ENCODE measurements at regions of chr19 and their contacts with region 1.

Region 1: DNA sequence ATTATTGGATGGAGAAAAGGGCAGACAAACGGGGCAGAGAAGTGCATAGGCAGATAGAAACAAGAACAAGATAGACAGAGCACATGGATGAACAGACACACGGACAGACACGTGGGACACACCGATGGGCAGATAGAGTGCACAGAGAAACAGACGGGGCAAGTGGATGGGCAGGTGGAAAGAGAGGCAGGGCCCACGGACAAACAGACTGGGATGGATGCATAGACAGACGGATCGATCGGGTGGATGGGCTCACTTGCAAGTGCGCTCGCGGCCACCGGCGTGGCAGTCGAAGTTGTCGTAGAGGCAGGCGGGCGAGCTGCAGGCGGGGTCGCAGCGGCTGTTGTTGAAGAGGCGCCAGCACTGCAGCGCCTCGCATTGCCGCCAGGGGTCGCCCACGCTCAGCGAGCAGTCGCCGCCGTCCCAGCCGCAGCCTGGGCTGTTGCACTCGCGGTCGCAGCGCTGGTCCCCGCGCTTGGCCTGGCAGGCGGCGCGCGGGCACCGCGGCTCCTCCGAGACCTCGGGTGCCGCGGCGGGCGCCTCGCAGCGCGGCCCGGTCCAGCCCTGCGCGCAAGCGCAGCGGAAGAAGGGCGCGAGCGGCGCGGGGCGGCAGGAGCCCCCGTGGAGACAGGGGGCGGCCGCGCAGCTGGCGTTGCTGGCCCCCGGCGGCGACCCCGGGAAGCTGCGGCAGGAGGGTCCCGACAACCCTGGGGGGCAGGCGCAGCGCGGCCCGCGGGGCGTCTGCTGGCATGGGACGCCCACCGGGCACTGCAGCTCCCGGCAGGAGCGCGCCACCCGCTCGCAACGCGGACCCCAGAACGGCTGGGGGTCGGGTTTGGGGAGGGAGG is 23.3 kb downstream of the NOTCH3 start:
- DNase-seq: peak; percentile 66 to 88 (median 82)
- ATAC-seq: peak; percentile 99
- H3K4me3 ChIP-seq: no peak overlapping the region
- H3K4me3 Mint-ChIP-seq: peak overlapping the region; percentile 29 to 84 (median 53)
- H3K27ac ChIP-seq: no peak overlapping the region
- H3K27ac Mint-ChIP-seq: peak overlapping the region in 1 of 9 donors; percentile 47
- H3K4me1 ChIP-seq: peaks cover 0 to 5% of the 10 kb centered on the region in 2 donors
- H3K4me1 Mint-ChIP-seq: peaks cover 4 to 8% (median 5%) of the 10 kb centered on the region in 7 donors
- H3K27me3 ChIP-seq: no peaks in the 10 kb centered on the region
- H3K27me3 Mint-ChIP-seq: peaks cover 0 to 20% (median 9%) of the 10 kb centered on the region in 5 donors

Region 2: DNA sequence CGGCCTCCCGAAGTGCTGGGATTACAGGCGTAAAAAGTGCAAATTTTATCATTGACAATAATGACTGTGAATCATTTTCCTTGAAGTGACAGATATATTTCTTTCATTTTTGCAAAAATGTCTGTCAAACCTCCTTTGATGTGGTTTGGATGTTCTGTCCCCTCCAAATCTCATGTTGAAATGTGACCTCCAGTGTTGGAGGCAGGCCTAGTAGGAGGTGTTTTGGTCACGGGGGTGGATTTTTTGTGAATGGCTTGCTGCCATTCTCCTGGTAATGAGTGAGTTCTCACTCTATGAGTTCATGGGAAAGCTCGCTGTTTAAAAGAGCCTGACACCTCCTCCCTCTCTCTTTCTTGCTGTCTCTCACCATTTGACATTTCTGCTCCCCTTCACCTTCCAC is 192.4 kb before region 1 on chr19:
- CTCF ChIA-PET with region 1: no interaction called
- POLR2A ChIA-PET with region 1: no interaction called
- intact Hi-C with region 1: no loop called
- DNase-seq: no peak
- ATAC-seq: no peak
- H3K4me3 ChIP-seq: no peak overlapping the region
- H3K4me3 Mint-ChIP-seq: no peak overlapping the region
- H3K27ac ChIP-seq: no peak overlapping the region
- H3K27ac Mint-ChIP-seq: peak overlapping the region in 1 of 9 donors; percentile 51
- H3K4me1 ChIP-seq: no peaks in the 10 kb centered on the region
- H3K4me1 Mint-ChIP-seq: no peaks in the 10 kb centered on the region
- H3K27me3 ChIP-seq: no peaks in the 10 kb centered on the region
- H3K27me3 Mint-ChIP-seq: peaks cover 15 to 46% (median 36%) of the 10 kb centered on the region in 5 donors

Region 3: GRCh38 chr19:15264061-15264932 is 86.8 kb after region 1 on chr19:
- CTCF ChIA-PET with region 1: no interaction called
- POLR2A ChIA-PET with region 1: no interaction called
- intact Hi-C with region 1: loop called in 1 of 2 experiments (anchors 1 kb)
- DNase-seq: peak; percentile 54 to 77 (median 65)
- ATAC-seq: peak; percentile 79
- H3K4me3 ChIP-seq: no peak overlapping the region
- H3K4me3 Mint-ChIP-seq: no peak overlapping the region
- H3K27ac ChIP-seq: no peak overlapping the region
- H3K27ac Mint-ChIP-seq: peak overlapping the region in 2 of 9 donors; percentile 14 to 38
- H3K4me1 ChIP-seq: no peaks in the 10 kb centered on the region
- H3K4me1 Mint-ChIP-seq: peaks cover 7 to 19% (median 11%) of the 10 kb centered on the region in 7 donors
- H3K27me3 ChIP-seq: no peaks in the 10 kb centered on the region
- H3K27me3 Mint-ChIP-seq: no peaks in the 10 kb centered on the region

Measured in naive thymus-derived CD4-positive, alpha-beta T cell (primary cell).